A549 (cell line): ENCODE measurements at regions of chr3 and their contacts with region 1.

Region 1: GRCh38 chr3:33131331-33132018 is 17.7 kb downstream of the CRTAP start:
- DNase-seq: peak; percentile 67 to 77
- ATAC-seq: peak; percentile 87 to 92
- H3K4me3 ChIP-seq: no peak overlapping the region
- H3K27ac ChIP-seq: no peak overlapping the region
- H3K4me1 ChIP-seq: 0 out of 3 replicates have a peak, but pooled peaks cover 5% of the 10 kb centered on the region
- CTCF ChIP-seq: peak; percentile 87
- EP300 ChIP-seq: no peak
- POLR2A ChIP-seq: no peak
- RAD21 ChIP-seq: peak; percentile 87 to 89

Region 2: GRCh38 chr3:33113772-33114621 is 17.5 kb before region 1 on chr3 and contains the start of gene CRTAP:
- CTCF ChIA-PET with region 1: interaction called, 31 read pairs
- POLR2A ChIA-PET with region 1: no interaction called
- DNase-seq: peak; percentile 70 to 97
- ATAC-seq: peak; percentile 87 to 92
- H3K4me3 ChIP-seq: peak within 1 kb of the TSS; percentile 59
- H3K27ac ChIP-seq: peak within 1 kb of the TSS; percentile 82 to 96
- H3K4me1 ChIP-seq: peaks cover 15% of the 10 kb centered on the region
- CTCF ChIP-seq: no peak; the same call in 2 of the 3 replicates
- EP300 ChIP-seq: no peak
- POLR2A ChIP-seq: peak; percentile 71
- RAD21 ChIP-seq: no peak
- polyA plus RNA-seq, gene CRTAP: 355 and 384 TPM in 2 replicates

Region 3: GRCh38 chr3:33144433-33144832 is 13.0 kb after region 1 on chr3:
- CTCF ChIA-PET with region 1: interaction called, 35 read pairs
- POLR2A ChIA-PET with region 1: no interaction called
- DNase-seq: peak; percentile 27 to 49
- ATAC-seq: peak; percentile 15 to 69; a peak in 3 of 6 replicates
- H3K4me3 ChIP-seq: no peak overlapping the region
- H3K27ac ChIP-seq: no peak overlapping the region
- H3K4me1 ChIP-seq: no peaks in the 10 kb centered on the region
- CTCF ChIP-seq: peak; percentile 52
- EP300 ChIP-seq: no peak
- POLR2A ChIP-seq: no peak
- RAD21 ChIP-seq: peak in 1 of 2 experiments; percentile 22; a peak in 1 of 5 replicates

Region 4: DNA sequence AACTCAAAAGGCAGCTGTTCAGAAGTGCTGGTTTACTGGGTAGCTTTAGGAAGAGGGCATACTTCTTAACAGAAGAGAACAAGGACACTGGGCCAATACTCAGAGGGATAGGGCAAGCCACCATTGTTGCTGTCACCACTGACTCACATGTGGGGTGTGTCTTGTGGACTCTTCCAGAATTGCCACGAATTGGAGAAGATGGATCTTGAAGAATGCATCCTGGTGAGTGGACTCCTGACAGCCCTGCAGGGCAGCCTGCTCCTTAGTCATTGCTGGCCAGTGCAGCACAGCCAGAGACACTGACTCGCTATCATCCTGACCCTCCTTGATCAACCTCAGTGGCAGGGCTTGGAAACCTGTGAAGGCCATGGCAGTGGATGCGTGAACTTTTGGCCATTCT is 246.5 kb after region 1 on chr3:
- CTCF ChIA-PET with region 1: interaction called, 187 read pairs
- POLR2A ChIA-PET with region 1: interaction called, 16 read pairs
- DNase-seq: peak in 1 of 2 experiments; percentile 44
- ATAC-seq: peak; percentile 66 to 75
- H3K4me3 ChIP-seq: no peak overlapping the region
- H3K27ac ChIP-seq: peak overlapping the region in 1 of 2 experiments; percentile 42; a peak in 2 of 6 replicates
- H3K4me1 ChIP-seq: no peaks in the 10 kb centered on the region; the same call in 1 of the 3 replicates
- CTCF ChIP-seq: no peak
- EP300 ChIP-seq: no peak
- POLR2A ChIP-seq: no peak
- RAD21 ChIP-seq: no peak

Region 5: DNA sequence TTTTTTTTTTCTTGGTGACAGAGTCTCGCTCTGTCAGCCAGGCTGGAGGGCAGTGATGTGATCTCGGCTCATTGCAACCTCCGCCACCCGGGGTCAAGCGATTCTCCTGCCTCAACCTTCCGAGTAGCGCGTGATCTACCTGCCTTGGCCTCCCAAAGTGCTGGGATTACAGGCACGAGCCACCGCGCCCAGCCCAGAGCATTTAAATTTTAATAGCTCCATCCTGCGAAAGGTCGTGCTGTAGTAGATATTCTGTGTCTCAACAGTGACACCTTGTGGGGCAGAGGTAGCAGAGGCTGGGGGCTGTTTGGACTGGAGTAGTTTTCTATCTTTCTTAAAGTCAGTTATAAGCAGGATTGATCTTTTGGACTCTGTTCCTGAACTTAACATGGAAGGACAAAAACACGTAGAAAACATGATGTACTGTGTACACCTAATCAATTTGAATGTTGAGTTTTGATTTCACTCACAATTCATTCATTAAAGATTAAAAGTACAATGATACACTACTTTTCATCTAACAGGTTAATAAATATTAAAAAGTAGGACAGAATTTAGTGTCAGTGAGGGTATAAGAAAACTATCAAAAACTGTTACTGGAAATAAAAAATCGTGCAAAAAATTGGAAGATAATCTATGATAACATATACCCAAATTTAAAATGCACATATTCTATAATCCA is 656.0 kb after region 1 on chr3:
- CTCF ChIA-PET with region 1: interaction called, 22 read pairs
- POLR2A ChIA-PET with region 1: no interaction called
- DNase-seq: peak; percentile 72 to 74
- ATAC-seq: peak; percentile 76 to 91
- H3K4me3 ChIP-seq: peak overlapping the region; percentile 35
- H3K27ac ChIP-seq: peak overlapping the region in 1 of 2 experiments; percentile 64; a peak in 3 of 6 replicates
- H3K4me1 ChIP-seq: peaks cover 40% of the 10 kb centered on the region
- CTCF ChIP-seq: peak; percentile 92
- EP300 ChIP-seq: no peak
- POLR2A ChIP-seq: no peak
- RAD21 ChIP-seq: peak; percentile 88 to 89